Activated CD8-positive, alpha-beta T cell treated with anti-CD3 and anti-CD28 coated beads for 36 hours (primary cell): ENCODE measurements at regions of chr11 and their contacts with region 1.

Region 1: DNA sequence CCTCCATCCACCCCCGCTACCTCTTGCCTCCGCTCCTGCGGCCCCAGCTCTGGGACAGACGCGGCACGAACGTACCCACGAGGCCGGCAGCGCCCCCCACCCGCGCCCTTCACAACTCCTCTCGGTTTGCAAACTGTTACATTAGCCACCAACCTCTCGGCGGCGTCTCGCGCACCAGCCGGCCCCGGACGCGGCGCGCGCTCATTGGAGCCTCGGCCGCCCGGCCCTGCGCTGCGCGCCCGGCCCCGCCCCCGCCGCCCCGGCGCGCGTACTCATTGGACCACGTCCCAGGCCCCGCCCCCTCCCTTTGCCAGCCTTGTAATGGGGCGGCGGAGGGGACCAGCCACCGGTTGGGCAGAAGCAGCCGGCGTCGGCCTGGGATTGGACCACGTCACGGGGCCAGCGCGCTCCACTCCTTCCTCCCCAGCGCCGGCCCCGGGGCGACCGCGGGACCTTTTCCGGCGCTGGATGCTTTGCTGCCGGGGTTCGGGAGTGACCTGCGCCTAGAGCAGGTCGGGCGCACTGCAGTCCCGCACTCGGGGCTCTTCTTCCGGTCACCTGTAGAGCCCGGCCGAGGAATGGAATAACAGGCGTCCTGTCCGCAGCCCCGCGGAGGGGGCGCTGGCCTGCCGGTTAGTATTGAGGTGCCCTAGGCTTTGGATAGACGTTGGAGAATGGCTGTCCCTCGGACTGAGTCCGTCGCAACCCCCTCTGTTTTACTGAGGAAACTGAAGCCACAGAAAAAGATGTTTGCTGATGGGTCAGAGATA is at the start of gene HYOU1:
- DNase-seq: peak; percentile 100
- ATAC-seq: peak; percentile 97
- H3K4me3 Mint-ChIP-seq: peak within 1 kb of the TSS; percentile 86
- H3K27ac Mint-ChIP-seq: peak within 1 kb of the TSS; percentile 95
- H3K4me1 Mint-ChIP-seq: peaks cover 35% of the 10 kb centered on the region
- H3K27me3 Mint-ChIP-seq: no peaks in the 10 kb centered on the region
- CTCF ChIP-seq: no peak
- total RNA-seq, gene HYOU1: 92.4 to 101 TPM

Region 2: DNA sequence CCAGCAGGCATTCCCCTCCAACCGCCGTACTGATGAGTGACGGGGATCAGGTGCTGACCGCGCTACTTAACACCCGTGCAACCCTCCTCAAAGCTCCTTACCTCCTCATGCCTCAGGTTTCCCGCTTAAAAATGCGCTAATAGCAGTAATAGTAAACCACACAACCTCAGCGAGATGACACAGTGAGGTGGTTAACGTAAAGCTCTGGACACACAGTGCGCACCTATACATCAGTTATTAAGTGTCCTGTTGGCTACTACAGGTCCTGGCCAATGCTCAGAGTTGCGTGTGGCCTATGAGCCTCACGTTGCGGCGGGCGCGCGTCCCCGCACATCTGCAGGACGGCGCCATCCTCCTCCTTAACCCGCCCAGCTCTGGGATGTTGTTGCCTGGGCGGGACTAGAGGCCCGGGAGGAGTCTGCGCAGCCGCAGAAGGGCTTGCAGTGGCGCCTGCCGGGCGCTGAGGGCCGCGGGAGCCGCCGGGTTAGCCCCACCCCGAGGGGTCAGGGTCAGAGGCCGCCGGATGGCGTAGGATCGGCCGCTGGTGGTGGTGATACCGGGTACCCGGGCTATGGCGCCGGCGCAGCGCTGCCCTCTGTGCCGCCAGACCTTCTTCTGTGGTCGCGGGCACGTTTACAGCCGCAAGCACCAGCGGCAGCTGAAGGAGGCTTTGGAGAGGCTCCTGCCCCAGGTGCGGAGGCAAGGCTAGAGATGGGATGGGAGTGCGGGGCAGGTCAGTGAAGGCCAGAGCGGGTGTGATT is 59.4 kb before region 1 on chr11 and contains the start of gene CENATAC:
- CTCF ChIA-PET with region 1: no interaction called
- POLR2A ChIA-PET with region 1: interaction called, 12 read pairs
- intact Hi-C with region 1: no loop called
- DNase-seq: peak; percentile 97
- ATAC-seq: peak; percentile 97
- H3K4me3 Mint-ChIP-seq: peak within 1 kb of the TSS; percentile 97
- H3K27ac Mint-ChIP-seq: peak within 1 kb of the TSS; percentile 99
- H3K4me1 Mint-ChIP-seq: peaks cover 31% of the 10 kb centered on the region
- H3K27me3 Mint-ChIP-seq: no peaks in the 10 kb centered on the region
- CTCF ChIP-seq: no peak
- total RNA-seq, gene CENATAC: 22.0 to 24.1 TPM

Region 3: DNA sequence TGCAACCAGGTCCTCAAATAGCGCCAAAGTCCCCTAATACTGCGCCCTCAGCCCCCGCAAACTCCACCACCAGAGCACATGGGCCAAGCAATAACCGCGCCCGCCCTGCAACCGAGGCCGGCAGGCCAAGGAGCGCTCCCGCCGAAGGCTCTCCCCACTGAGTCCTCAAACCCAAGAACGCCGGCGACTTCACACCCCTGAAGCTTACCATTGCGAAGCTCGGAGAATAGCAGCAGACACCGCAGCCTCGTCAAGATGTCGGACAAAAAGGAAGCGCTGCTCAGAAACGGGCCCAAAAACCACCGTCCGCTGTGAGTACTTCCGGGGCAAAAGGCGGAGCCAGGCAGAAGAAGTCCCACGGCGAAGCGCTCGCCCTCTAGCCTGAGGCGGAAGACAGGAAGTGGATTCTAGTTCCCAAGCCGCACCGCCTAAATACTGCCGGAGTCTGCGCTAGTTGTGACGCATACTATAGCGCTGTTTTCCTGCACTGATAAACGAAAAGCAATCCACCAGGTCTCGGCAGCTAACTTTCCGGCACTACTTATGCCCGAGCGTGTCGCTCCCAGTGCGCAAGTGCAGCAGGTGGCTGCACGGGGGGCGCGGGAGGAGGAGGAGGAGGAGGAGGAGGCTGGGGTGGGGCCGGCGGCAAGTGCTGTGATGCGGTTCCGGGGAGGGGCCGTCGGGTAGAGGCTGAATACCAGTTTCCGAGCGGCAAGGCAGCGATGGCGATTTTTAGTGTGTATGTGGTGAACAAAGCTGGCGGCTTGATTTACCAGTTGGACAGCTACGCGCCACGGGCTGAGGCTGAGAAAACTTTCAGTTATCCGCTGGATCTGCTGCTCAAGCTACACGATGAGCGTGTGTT is 38.9 kb before region 1 on chr11 and contains the starts of genes RPS25 and TRAPPC4:
- CTCF ChIA-PET with region 1: interaction called, 8 read pairs
- POLR2A ChIA-PET with region 1: interaction called, 26 read pairs
- intact Hi-C with region 1: no loop called
- DNase-seq: peak; percentile 97
- ATAC-seq: peak; percentile 91
- H3K4me3 Mint-ChIP-seq: peak within 1 kb of the TSS; percentile 99
- H3K27ac Mint-ChIP-seq: peak within 1 kb of the TSS; percentile 99
- H3K4me1 Mint-ChIP-seq: peaks cover 53% of the 10 kb centered on the region
- H3K27me3 Mint-ChIP-seq: no peaks in the 10 kb centered on the region
- CTCF ChIP-seq: no peak
- total RNA-seq, gene RPS25: 1,901 to 1,911 TPM
- total RNA-seq, gene TRAPPC4: 69.5 to 71.4 TPM

Region 4: DNA sequence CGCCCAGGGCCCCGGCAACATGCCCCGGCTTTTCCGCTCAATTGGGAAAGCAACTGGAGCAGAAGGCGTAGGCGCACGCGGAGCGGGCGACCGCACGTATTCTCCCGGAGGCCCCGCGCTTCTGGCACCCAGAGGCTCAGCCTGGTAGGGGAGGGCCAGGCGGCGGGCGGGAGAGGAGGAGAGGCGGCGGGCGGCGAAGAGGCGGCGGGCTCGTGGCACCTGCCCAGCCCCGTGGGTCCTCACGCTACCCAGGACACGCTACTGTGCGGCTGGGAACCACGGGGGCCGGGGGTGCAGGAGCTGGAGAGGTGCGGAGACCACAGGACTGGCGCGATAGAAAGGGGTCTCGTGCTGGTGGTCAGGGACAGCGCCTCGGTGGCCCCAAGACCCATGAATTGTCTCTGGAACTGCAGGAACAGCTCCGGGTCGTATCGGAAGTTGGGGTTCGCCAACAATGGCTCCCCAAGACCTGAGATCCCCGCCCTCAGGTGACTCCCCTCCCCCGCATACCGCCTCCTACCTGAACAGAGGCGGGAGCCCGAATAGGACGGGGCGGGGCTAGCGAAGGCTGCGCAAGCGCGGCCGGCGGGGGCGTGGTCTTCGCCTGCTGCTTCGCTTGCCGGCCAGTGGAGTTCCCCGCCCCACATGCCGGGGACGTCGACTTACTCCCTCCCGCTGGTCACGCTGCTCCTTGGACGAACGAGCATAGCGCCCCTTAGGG is 26.7 kb before region 1 on chr11 and contains the start of gene SLC37A4:
- CTCF ChIA-PET with region 1: interaction called, 18 read pairs
- POLR2A ChIA-PET with region 1: interaction called, 10 read pairs
- intact Hi-C with region 1: no loop called
- DNase-seq: peak; percentile 99
- ATAC-seq: peak; percentile 87
- H3K4me3 Mint-ChIP-seq: peak within 1 kb of the TSS; percentile 70
- H3K27ac Mint-ChIP-seq: peak within 1 kb of the TSS; percentile 90
- H3K4me1 Mint-ChIP-seq: peaks cover 23% of the 10 kb centered on the region
- H3K27me3 Mint-ChIP-seq: no peaks in the 10 kb centered on the region
- CTCF ChIP-seq: peak; percentile 85
- total RNA-seq, gene SLC37A4: 32.4 to 35.2 TPM

Region 5: DNA sequence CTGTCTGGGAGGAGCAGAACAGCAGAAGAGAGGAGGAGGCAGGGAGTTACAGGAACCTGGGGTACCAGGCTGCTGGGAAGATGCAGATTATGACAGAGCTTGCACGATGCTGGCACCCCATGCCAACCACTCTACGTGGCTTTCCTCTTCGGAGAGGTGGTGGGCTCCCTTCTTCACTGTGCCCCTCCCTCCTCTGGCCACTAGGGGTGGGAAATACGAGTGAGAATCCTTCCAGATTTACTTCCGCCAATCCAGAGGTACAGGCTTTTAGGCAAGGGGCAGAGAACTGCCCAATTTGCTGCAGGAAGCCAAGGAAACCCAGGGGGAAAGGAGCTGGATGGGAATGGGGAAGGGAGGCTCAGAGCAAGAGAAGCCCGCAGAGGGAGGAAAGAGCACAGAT is 12.5 kb before region 1 on chr11:
- CTCF ChIA-PET with region 1: interaction called, 6 read pairs
- POLR2A ChIA-PET with region 1: interaction called, 26 read pairs
- intact Hi-C with region 1: no loop called
- DNase-seq: no peak
- ATAC-seq: no peak
- H3K4me3 Mint-ChIP-seq: no peak overlapping the region
- H3K27ac Mint-ChIP-seq: no peak overlapping the region
- H3K4me1 Mint-ChIP-seq: peaks cover 7% of the 10 kb centered on the region
- H3K27me3 Mint-ChIP-seq: no peaks in the 10 kb centered on the region
- CTCF ChIP-seq: peak; percentile 35

Region 6: GRCh38 chr11:119067371-119068222 is 10.4 kb after region 1 on chr11 and contains the start of gene VPS11:
- CTCF ChIA-PET with region 1: interaction called, 16 read pairs
- POLR2A ChIA-PET with region 1: interaction called, 23 read pairs
- intact Hi-C with region 1: no loop called
- DNase-seq: peak; percentile 99
- ATAC-seq: peak; percentile 98
- H3K4me3 Mint-ChIP-seq: peak within 1 kb of the TSS; percentile 87
- H3K27ac Mint-ChIP-seq: peak within 1 kb of the TSS; percentile 94
- H3K4me1 Mint-ChIP-seq: peaks cover 34% of the 10 kb centered on the region
- H3K27me3 Mint-ChIP-seq: no peaks in the 10 kb centered on the region
- CTCF ChIP-seq: no peak
- total RNA-seq, gene VPS11: 17.1 to 17.2 TPM

Region 7: GRCh38 chr11:119095066-119095880 is 38.1 kb after region 1 on chr11:
- CTCF ChIA-PET with region 1: no interaction called
- POLR2A ChIA-PET with region 1: interaction called, 10 read pairs
- intact Hi-C with region 1: no loop called
- DNase-seq: peak; percentile 100
- ATAC-seq: peak; percentile 86
- H3K4me3 Mint-ChIP-seq: peak overlapping the region; percentile 93
- H3K27ac Mint-ChIP-seq: peak overlapping the region; percentile 91
- H3K4me1 Mint-ChIP-seq: peaks cover 41% of the 10 kb centered on the region
- H3K27me3 Mint-ChIP-seq: peaks cover 1% of the 10 kb centered on the region
- CTCF ChIP-seq: no peak